Activated CD4-positive, alpha-beta T cell treated with anti-CD3 and anti-CD28 coated beads, Interleukin-2, amount 10 ng/mL, durations not matched to agents 7 days and 5 days (primary cell): ENCODE measurements at regions of chr19 and their contacts with region 1.

Region 1: DNA sequence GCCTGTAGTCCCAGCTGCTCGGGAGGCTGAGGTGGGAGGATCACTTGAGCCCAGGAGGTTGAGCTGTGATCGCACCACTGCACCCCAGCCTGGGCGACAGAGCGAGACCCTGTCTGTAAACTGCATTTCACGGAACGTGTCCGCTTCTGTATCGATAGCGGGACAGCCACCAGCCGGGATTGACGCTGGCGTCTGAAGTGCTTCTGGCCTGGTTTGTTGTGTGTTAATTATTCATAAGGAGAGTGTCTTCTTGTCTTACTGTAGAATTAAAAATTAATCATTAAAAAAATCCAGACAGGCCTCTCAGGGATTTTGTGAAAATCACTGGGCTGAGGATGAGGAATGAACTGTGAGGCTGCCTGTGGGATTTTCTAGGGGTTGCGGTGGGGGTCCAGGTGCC is 16.2 kb upstream of the MISP start:
- DNase-seq: no peak
- H3K4me3 Mint-ChIP-seq: no peak overlapping the region
- H3K27ac Mint-ChIP-seq: no peak overlapping the region
- H3K4me1 Mint-ChIP-seq: peaks cover 15% of the 10 kb centered on the region
- H3K27me3 Mint-ChIP-seq: no peaks in the 10 kb centered on the region

Region 2: GRCh38 chr19:662962-663681 is 71.6 kb before region 1 on chr19 and contains the start of gene RNF126:
- CTCF ChIA-PET with region 1: interaction called, 10 read pairs
- POLR2A ChIA-PET with region 1: no interaction called
- DNase-seq: peak; percentile 91
- H3K4me3 Mint-ChIP-seq: peak within 1 kb of the TSS; percentile 99
- H3K27ac Mint-ChIP-seq: peak within 1 kb of the TSS; percentile 97
- H3K4me1 Mint-ChIP-seq: peaks cover 39% of the 10 kb centered on the region
- H3K27me3 Mint-ChIP-seq: no peaks in the 10 kb centered on the region
- total RNA-seq, gene RNF126: 71.5 to 80.3 TPM

Region 3: GRCh38 chr19:718991-719512 is 15.7 kb before region 1 on chr19:
- CTCF ChIA-PET with region 1: no interaction called
- POLR2A ChIA-PET with region 1: no interaction called
- DNase-seq: no peak
- H3K4me3 Mint-ChIP-seq: no peak overlapping the region
- H3K27ac Mint-ChIP-seq: no peak overlapping the region
- H3K4me1 Mint-ChIP-seq: no peaks in the 10 kb centered on the region
- H3K27me3 Mint-ChIP-seq: peaks cover 3% of the 10 kb centered on the region